Sigmoid colon (tissue), 7 donors: ENCODE measurements at regions of chr5 and their contacts with region 1.

Region 1: DNA sequence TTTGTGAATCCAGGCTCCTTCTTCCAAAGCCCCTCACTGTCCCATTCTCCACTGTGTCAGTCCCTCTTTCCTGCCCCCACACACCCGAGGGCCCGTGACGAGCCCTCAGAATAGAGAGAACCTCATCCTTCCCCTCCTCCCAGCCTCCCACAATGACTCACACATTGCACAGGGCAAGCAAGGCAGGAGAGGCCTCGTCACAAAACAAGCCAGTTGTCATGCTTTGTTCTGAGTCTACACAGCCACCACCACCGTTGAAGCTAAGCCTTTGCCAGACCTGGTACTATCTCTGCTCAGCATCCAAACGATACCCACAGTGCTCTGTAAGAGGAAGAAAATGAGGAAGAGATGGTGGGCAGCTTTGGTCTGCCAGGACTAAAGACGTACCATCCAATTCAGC is 142.2 kb upstream of the ZNF366 start:
- DNase-seq: peak; percentile 73
- H3K4me3 ChIP-seq: no peak overlapping the region
- H3K27ac ChIP-seq: peak overlapping the region in 3 of 4 donors; percentile 48 to 74 (median 69)
- H3K4me1 ChIP-seq: peaks cover 0 to 48% (median 42%) of the 10 kb centered on the region in 4 donors
- H3K27me3 ChIP-seq: no peaks in the 10 kb centered on the region
- CTCF ChIP-seq: no peak
- EP300 ChIP-seq: no peak
- POLR2A ChIP-seq: no peak

Region 2: DNA sequence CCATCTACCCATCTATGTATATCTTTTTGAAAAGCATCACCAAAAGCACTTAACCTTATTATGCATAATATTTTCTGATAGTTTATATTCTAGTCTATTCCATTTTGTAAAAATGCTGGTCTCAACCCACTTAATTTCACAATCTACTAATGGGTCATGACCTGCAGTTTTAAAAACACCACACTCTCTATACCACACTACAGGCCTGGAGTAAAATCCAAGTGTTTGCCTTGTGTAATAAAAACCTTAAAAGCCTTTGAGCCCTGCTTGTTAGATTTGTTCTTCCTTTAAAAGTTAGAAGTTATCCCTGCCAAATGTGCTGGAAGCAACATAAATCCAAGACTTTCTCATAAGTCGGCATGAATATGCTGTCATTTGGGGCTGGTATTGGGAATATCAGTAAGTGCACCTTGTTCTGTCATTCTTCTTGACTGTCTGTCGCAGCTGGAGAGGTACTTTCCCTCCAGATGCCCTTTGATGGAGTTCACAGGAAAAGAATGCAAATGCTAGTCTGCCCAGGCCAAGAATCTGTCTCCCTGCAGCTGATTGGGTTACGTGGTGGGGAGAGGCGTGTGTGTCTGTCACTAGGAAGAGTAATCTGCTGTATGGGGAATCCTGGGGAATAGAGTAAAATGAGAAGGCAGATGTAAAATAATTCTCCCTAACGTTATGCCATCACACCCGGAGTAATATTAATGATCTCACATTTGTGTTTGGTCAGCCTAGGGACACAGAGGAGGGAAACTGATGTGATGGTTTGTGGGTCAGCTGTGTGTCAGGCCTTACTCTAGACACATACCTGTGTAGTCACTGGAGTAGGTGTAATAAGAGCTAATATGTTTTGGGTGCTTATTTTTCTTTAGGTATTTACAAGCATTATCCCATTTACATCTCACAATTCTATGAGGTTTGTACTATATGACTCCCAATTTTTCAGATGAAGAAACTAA is 221.7 kb before region 1 on chr5:
- intact Hi-C with region 1: no loop called
- DNase-seq: no peak
- H3K4me3 ChIP-seq: no peak overlapping the region
- H3K27ac ChIP-seq: peak overlapping the region; percentile 8 to 58 (median 41)
- H3K4me1 ChIP-seq: peaks cover 0 to 27% (median 20%) of the 10 kb centered on the region in 4 donors
- H3K27me3 ChIP-seq: no peaks in the 10 kb centered on the region
- CTCF ChIP-seq: no peak
- EP300 ChIP-seq: no peak
- POLR2A ChIP-seq: no peak

Region 3: DNA sequence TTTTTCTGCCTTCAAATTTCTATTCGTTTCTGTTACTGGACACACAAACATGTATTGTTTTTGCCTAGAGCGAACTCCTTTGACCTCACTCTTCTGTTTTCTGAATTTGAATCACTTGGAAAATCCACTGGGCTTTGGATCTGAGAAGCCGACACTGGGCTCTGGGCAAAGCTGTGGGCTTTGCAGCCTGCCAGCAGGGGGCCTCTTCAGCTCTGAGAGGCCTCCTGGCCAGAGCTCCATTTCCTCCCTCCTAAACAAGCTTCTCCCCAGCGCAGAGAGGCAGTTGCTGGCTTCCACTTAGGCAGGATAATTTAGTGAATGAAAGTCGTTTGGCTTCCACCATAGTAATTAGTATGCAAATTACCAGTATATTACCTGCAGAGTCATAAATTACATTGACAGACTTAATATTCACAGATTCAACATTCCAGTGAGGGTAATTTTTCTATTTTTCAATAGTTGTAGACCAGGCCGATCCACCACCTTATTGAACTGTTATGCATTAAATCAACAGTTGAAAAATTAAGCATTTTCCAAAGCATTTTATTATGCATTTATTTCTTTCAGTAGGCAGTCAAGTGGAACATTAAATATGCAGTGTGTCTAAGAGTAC is 38.2 kb before region 1 on chr5:
- intact Hi-C with region 1: loop called (anchors 5 kb)
- DNase-seq: peak; percentile 88
- H3K4me3 ChIP-seq: no peak overlapping the region
- H3K27ac ChIP-seq: no peak overlapping the region
- H3K4me1 ChIP-seq: peaks cover 2 to 19% (median 10%) of the 10 kb centered on the region in 4 donors
- H3K27me3 ChIP-seq: no peaks in the 10 kb centered on the region
- CTCF ChIP-seq: peak; percentile 75 to 95 (median 86)
- EP300 ChIP-seq: no peak
- POLR2A ChIP-seq: no peak

Region 4: GRCh38 chr5:72681781-72682180 is 32.3 kb after region 1 on chr5:
- intact Hi-C with region 1: no loop called
- DNase-seq: no peak
- H3K4me3 ChIP-seq: no peak overlapping the region
- H3K27ac ChIP-seq: no peak overlapping the region
- H3K4me1 ChIP-seq: no peaks in the 10 kb centered on the region
- H3K27me3 ChIP-seq: no peaks in the 10 kb centered on the region
- CTCF ChIP-seq: no peak
- EP300 ChIP-seq: no peak
- POLR2A ChIP-seq: no peak

Region 5: DNA sequence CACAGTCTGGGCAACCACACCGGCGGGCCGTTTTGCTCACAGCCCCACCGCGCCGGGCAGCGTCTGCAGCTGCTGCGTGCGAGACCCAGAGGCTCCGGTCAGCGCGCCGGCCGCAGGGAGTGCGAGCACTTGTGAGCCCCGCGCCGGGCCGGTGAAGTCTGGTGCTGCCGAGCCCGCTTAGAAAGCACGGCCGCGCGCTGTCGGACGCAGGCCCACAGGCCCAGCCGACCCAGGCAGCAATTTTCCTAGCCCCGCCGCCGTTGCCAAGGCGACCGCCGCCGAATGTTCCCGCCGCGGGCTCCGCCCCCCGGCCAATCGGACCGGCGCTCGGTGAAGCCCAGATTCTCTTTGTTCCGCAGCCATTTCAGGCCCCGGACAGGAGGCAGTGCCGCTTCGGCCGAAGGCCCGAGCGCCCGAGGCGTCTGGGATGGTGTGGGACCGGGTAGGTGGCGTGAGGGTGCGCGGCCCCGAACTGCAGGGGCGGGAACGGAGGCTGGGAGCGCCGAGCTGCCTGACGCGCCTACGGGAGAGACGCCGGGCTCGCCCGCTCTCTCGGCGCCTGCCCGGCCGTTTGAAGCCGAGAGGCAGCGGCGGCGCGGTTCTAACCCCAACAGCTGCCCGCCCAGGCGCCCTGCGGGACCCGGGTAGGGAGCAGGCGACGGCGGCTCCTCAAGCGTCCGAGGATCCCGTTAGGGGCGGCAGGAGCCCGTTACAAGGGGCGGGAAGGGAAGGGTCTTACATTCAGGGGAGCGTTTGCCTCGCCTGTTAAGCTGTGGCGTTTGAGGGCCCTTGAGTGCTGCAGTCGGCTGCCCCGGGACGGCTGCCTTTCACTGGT is 167.1 kb after region 1 on chr5 and contains the start of gene TNPO1:
- intact Hi-C with region 1: no loop called
- DNase-seq: peak; percentile 96
- H3K4me3 ChIP-seq: peak within 1 kb of the TSS; percentile 65 to 88 (median 74)
- H3K27ac ChIP-seq: peak within 1 kb of the TSS; percentile 94 to 98 (median 96)
- H3K4me1 ChIP-seq: peaks cover 0 to 29% (median 24%) of the 10 kb centered on the region in 4 donors
- H3K27me3 ChIP-seq: no peaks in the 10 kb centered on the region
- CTCF ChIP-seq: no peak
- EP300 ChIP-seq: peak in 1 of 4 donors; percentile 32
- POLR2A ChIP-seq: peak; percentile 90 to 92
- total RNA-seq, gene TNPO1: 86.2 to 145 (median 113) TPM